Mammary epithelial cell (primary cell): ENCODE measurements at regions of chr1 and their contacts with region 1.

Region 1: DNA sequence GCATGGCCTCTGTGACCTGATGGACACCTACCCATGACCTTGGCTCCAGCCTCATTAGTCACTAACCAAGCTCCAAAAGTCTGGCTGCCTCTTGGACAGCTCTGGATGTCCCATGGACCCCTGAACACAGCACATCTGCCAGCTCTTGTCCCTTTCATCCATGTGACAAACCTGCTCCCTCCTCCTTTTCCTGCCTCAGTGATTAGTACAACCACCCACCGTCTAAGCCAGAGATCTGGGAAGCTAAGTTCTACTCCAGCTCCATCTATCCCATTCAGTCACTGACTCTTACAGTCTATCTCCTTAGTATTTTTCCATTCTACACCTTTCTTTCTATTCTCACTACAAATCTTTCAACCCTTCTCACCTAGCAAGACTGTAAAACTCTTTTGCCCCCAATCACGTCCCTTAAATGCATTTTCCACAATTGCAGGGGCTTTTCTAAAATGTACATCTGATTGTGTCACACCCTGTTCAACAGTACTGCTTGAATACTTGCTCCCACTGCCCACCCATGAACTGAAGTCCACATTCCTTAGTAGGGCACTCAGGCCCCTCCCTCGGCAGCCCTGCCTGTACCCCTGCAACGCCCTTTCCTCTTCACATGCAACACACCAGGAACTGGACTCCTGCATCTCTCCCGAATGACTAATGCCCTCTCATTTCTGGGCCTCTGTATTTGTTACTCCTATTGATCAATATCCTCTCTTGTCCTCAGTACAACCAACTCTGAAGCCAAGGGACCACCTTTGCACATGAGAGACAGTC is 7.2 kb downstream of the GPN2 start:
- DNase-seq: no peak
- H3K4me3 ChIP-seq: no peak overlapping the region
- H3K27ac ChIP-seq: no peak overlapping the region
- H3K4me1 ChIP-seq: peaks cover under 1% of the 10 kb centered on the region
- H3K27me3 ChIP-seq: no peaks in the 10 kb centered on the region
- CTCF ChIP-seq: no peak

Region 2: GRCh38 chr1:26811057-26811456 is 71.8 kb before region 1 on chr1:
- CTCF ChIA-PET with region 1: no interaction called
- dilution Hi-C with region 1: no loop called
- in situ Hi-C with region 1: no loop called
- intact Hi-C with region 1: loop called (anchors 2 kb)
- DNase-seq: no peak
- H3K4me3 ChIP-seq: no peak overlapping the region
- H3K27ac ChIP-seq: no peak overlapping the region
- H3K4me1 ChIP-seq: no peaks in the 10 kb centered on the region
- H3K27me3 ChIP-seq: no peaks in the 10 kb centered on the region
- CTCF ChIP-seq: no peak